Colonic mucosa (tissue), 4 donors: ENCODE measurements at regions of chr3 and their contacts with region 1.

Region 1: GRCh38 chr3:36729204-36730056 is 34.9 kb downstream of the DCLK3 start:
- DNase-seq: no peak
- H3K4me3 ChIP-seq: no peak overlapping the region
- H3K27ac ChIP-seq: no peak overlapping the region
- H3K4me1 ChIP-seq: no peaks in the 10 kb centered on the region
- H3K27me3 ChIP-seq: no peaks in the 10 kb centered on the region
- CTCF ChIP-seq: peak; percentile 47

Region 2: DNA sequence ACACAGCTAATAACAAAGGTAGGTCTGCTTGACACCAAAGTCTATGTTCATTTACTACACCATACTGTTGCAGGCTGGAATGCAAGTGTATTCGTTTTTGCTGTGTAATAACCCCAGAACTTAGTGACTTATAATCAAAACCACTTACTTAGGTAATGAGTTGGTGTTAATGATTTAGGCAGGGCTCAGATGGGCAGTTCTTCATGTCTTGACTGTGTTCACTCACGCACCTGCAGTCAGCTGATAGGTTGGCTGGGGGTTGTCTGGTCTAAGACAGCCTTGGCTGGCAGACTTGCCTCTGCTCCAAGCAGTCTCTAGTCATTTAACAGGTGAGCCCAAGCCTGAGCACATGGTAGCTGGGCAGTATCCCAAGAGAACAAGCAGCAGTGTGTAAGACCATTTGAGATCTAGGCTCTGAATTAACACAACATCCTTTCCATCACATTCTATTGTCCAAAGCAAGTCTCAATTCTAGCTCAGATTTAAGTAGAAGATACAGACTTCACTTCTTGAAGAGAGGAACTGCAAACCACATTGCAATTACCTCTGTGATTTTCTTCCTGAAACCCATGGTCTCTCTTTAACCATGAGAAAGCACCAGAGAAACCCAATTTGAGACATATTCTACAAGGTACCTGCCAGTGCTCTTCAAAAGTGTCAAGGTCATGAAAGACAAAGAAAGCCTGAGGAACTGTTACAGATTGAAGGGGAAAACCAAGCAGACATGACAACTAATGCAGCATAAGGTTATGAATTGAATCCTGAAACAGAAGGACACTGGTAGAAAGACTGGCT is 48.2 kb after region 1 on chr3:
- intact Hi-C with region 1: no loop called
- DNase-seq: no peak
- H3K4me3 ChIP-seq: no peak overlapping the region
- H3K27ac ChIP-seq: no peak overlapping the region
- H3K4me1 ChIP-seq: no peaks in the 10 kb centered on the region
- H3K27me3 ChIP-seq: no peaks in the 10 kb centered on the region
- CTCF ChIP-seq: no peak

Region 3: GRCh38 chr3:36868614-36869436 is 139.4 kb after region 1 on chr3:
- intact Hi-C with region 1: loop called (anchors 2 kb)
- DNase-seq: peak; percentile 34
- H3K4me3 ChIP-seq: no peak overlapping the region
- H3K27ac ChIP-seq: no peak overlapping the region
- H3K4me1 ChIP-seq: no peaks in the 10 kb centered on the region
- H3K27me3 ChIP-seq: no peaks in the 10 kb centered on the region
- CTCF ChIP-seq: peak; percentile 76

Region 4: GRCh38 chr3:36957862-36958686 is 228.6 kb after region 1 on chr3:
- intact Hi-C with region 1: loop called (anchors 2 kb)
- DNase-seq: no peak
- H3K4me3 ChIP-seq: no peak overlapping the region
- H3K27ac ChIP-seq: peak overlapping the region; percentile 53
- H3K4me1 ChIP-seq: no peaks in the 10 kb centered on the region
- H3K27me3 ChIP-seq: no peaks in the 10 kb centered on the region
- CTCF ChIP-seq: no peak

Region 5: DNA sequence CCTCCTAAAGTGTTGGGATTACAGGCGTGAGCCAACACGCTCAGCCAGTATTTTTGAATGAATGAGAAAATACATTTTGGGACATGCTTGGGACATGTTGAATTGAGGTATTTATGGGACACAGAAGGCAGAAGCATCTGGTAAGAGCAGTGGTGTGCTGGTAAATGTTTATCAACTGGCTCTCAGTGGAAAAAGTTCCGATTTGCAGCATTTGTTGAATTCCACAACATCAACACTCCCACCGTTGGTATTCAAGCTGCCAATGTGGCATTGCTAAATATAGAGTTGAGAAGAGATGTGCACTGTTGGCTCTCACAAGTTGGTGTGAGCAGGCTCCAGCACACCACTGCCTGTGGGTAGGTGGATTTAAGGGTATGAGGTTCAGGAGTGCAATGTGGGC is 480.8 kb after region 1 on chr3:
- intact Hi-C with region 1: loop called (anchors 5 kb)
- DNase-seq: no peak
- H3K4me3 ChIP-seq: no peak overlapping the region
- H3K27ac ChIP-seq: no peak overlapping the region
- H3K4me1 ChIP-seq: no peaks in the 10 kb centered on the region
- H3K27me3 ChIP-seq: no peaks in the 10 kb centered on the region
- CTCF ChIP-seq: no peak